Activated CD4-positive, alpha-beta T cell treated with anti-CD3 and anti-CD28 coated beads for 36 hours (primary cell): ENCODE measurements at regions of chr6 and their contacts with region 1.

Region 1: DNA sequence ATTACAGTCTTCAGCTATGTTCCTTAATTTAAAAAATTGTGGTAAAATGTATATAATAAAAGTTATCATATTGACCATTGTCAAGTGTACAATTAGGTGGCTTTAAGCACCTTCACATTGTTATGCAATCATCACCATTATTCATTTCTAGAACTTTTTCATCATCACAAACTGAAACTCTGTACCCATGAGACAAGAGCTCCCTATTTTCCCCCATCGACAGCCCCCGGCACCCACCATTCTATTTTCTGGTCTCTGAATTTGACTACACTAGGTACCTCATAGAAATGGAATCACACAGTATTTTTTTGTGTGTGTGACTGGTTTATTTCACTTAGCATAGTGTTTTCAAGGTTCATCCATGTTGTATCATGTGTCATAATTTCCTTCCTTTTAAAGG is 39.7 kb upstream of the FYN start:
- DNase-seq: peak; percentile 26
- ATAC-seq: peak; percentile 55
- H3K4me3 Mint-ChIP-seq: no peak overlapping the region
- H3K27ac Mint-ChIP-seq: no peak overlapping the region
- H3K4me1 Mint-ChIP-seq: peaks cover 9% of the 10 kb centered on the region
- H3K27me3 Mint-ChIP-seq: no peaks in the 10 kb centered on the region

Region 2: GRCh38 chr6:111614833-111615582 is 297.9 kb before region 1 on chr6:
- CTCF ChIA-PET with region 1: no interaction called
- POLR2A ChIA-PET with region 1: no interaction called
- intact Hi-C with region 1: no loop called
- DNase-seq: peak; percentile 31
- ATAC-seq: peak; percentile 39
- H3K4me3 Mint-ChIP-seq: no peak overlapping the region
- H3K27ac Mint-ChIP-seq: no peak overlapping the region
- H3K4me1 Mint-ChIP-seq: no peaks in the 10 kb centered on the region
- H3K27me3 Mint-ChIP-seq: peaks cover 3% of the 10 kb centered on the region

Region 3: DNA sequence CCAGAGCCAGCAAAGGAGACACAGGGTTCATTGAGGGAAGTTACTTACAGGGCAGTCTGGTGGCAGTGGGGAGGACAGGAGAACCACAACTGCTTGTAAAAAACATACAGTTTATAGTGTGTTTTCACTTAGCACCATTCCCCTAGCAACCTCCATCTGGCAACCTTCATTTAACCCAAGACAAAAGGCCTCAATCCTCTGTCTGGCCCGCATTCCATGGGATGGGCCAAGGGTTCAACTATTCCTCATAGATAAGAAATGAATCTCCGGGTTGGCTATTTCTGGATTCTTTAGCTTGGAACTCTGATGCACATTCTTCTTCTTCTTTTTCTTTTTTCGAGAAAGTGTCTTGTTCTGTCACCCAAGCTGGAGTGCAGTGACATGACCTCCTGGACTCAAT is 13.4 kb before region 1 on chr6:
- CTCF ChIA-PET with region 1: interaction called, 6 read pairs
- POLR2A ChIA-PET with region 1: no interaction called
- intact Hi-C with region 1: loop called in 1 of 2 experiments (anchors 1 kb)
- DNase-seq: no peak
- ATAC-seq: no peak
- H3K4me3 Mint-ChIP-seq: no peak overlapping the region
- H3K27ac Mint-ChIP-seq: no peak overlapping the region
- H3K4me1 Mint-ChIP-seq: no peaks in the 10 kb centered on the region
- H3K27me3 Mint-ChIP-seq: no peaks in the 10 kb centered on the region